HEK293 (cell line): ENCODE measurements at regions of chr10 and their contacts with region 1.

Region 1: DNA sequence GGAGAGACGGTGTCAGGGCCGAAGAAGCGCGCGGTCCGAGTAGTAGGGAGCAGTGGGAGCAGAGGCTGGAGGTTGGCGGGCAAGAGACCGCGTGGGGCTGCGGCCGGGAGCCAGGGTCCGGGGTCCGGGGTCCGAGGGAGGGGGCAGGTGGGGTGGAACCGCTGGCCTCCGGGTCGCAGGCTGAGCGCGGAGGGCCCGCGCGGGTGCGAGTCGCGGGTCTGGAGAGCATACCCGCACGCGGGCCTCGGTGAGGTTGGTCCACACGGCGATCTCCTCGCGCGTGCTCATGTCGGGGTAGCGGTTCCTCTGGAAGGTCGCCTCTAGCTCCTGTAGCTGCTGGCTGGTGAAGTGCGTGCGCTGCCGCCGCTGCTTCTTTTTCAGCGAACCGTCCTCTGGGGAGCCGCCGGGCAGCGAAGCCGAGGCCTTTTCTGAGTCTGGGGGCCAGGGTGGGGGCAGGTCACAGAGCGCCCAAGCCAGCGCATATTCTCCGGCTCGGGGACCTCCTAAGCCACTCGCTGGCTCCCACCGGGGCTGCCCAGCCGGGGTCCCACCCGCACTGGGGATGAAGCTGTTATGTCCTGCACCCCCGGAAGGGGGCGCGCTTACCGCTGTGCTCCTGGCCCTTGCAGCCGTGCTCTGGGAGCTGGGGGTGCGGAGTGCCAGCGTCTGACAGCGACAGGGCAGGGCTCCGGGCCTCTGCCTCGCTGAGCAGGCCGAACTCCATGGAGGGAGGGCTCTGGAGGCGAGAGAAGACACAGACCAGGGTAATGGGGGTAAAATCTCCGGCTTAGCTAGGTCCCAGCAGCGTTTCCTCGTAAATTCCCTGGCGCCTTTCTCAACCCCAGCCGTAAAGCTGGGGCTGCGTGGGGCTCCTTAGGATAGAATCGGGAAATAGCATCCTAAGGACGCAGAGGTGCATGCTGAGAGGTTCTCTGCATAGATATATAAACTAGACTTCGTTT is 5.5 kb downstream of the ELOVL3 start:
- H3K4me3 ChIP-seq: peak overlapping the region; percentile 53
- H3K27ac ChIP-seq: peak overlapping the region; percentile 77; the same call in 1 of the 2 replicates
- H3K4me1 ChIP-seq: no peaks in the 10 kb centered on the region
- CTCF ChIP-seq: peak; percentile 98

Region 2: GRCh38 chr10:102220612-102221011 is 11.0 kb before region 1 on chr10:
- CTCF ChIA-PET with region 1: interaction called, 31 read pairs
- POLR2A ChIA-PET with region 1: interaction called, 3 read pairs
- H3K4me3 ChIP-seq: no peak overlapping the region
- H3K27ac ChIP-seq: no peak overlapping the region
- H3K4me1 ChIP-seq: peaks cover 3% of the 10 kb centered on the region; the same call in 1 of the 2 replicates
- CTCF ChIP-seq: no peak

Region 3: DNA sequence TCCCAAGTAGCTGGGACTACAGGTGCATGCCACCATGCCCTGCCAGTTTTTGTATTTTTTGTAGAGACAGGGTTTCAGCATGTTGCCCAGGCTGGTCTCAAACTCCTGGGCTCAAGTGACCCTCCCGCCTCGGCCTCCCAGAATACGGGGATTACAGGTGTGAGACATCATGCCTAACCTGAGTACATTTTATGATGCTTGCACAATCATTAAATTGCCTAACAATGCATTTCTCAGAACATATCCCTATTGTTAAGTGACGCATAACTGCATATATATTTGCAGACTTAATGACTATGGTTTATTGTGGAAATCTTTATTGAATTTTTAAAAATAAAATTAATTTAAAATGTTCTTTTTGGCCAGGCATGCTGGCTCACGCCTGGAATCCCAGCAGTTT is 1076.0 kb after region 1 on chr10:
- CTCF ChIA-PET with region 1: no interaction called
- POLR2A ChIA-PET with region 1: no interaction called
- H3K4me3 ChIP-seq: no peak overlapping the region
- H3K27ac ChIP-seq: no peak overlapping the region
- H3K4me1 ChIP-seq: no peaks in the 10 kb centered on the region
- CTCF ChIP-seq: no peak